ENCODE measurements at regions of chr22 and their contacts with region 1.

Region 1: DNA sequence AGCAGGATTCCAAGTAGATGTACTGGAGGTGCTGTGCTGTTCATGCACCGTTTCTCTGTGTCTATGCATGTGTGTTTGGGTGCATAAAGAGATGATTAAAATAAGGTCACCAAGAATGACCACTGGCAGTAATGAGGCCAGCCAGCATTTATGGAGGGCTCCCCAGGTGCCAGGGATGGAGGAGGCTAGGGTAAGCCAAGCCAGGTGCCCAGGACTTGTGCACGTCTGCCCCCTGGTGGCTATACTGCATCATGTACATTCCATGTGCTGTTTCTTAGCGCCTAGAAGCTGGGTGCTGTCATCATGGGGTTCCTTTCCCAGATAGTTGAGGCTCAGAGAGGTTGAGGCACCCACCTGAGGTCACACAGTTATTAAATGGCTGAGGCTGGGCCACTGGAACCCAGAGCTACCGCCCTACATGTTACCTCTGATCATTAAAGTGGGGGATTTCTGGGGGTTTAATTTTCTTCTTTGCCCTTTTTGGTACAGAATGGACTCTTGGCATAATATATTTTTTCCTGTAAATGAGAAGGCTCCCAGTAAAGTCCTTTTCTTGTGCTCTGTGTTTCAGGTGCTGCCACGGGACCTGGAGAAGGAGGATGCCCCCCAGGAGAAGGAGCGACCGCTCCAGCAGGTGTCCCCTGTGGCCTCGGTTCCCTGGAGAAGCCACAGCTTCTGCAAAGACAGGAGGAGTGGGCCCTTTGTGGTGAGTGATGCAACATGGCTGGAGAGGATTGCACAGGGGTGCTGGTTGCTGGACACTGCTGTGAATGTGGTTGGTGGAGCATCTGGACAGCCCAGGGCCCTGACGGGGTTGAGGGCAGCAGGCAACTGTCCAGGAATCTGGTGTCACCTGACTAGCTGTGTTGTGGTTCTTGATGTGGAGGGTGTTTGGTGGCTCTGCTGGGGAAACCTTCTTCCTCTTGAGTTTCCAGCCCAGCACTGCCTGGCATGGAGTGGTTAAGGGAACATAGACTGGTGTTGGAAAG is 96.4 kb downstream of the KIAA1671 start:
- DNase-seq: peak; percentile 52 to 67 (median 63)
- H3K4me3 ChIP-seq: no peak overlapping the region
- H3K27ac ChIP-seq: no peak overlapping the region
- H3K4me1 ChIP-seq: no peaks in the 10 kb centered on the region
- H3K27me3 ChIP-seq: no peaks in the 10 kb centered on the region

Region 2: GRCh38 chr22:24768537-24769374 is 280.2 kb before region 1 on chr22:
- CTCF ChIA-PET with region 1: interaction called, 15 read pairs
- POLR2A ChIA-PET with region 1: no interaction called
- DNase-seq: peak; percentile 34 to 73 (median 55)
- H3K4me3 ChIP-seq: no peak overlapping the region
- H3K27ac ChIP-seq: no peak overlapping the region
- H3K4me1 ChIP-seq: peaks cover 0 to 2% (median under 1%) of the 10 kb centered on the region in 4 experiments
- H3K27me3 ChIP-seq: peaks cover 0 to 3% (median 1%) of the 10 kb centered on the region in 5 experiments

Region 3: DNA sequence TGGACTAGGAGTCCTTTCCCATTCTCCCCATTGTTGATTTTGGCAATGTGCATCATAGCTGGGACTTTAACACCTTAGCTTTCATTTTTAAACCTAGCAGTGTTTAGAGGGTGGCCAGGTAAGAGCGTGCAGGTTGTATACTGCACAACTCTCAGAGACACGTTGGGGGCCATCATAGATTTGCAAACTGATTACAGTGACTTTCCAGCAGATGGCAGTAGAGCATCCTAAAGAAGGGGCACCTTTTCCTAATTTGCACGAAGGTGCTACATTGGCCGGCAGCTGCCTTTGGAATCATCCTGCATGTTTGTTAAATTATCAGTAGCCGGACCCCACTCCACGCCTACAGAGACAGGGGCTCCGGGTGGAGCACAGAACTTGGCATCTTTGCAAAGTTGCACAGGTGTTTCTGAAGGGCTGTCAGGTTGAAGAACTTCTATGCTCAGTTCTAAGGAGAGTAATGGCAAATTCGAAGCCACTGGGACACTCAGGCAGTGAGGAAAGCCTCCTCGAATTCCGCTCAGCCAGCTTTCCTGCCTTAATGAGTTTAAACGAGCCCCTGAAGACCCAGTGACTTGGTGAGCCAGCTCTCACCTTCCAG is 110.1 kb before region 1 on chr22:
- CTCF ChIA-PET with region 1: interaction called, 43 read pairs
- POLR2A ChIA-PET with region 1: no interaction called
- DNase-seq: peak; percentile 50 to 73 (median 66)
- H3K4me3 ChIP-seq: no peak overlapping the region
- H3K27ac ChIP-seq: no peak overlapping the region
- H3K4me1 ChIP-seq: no peaks in the 10 kb centered on the region
- H3K27me3 ChIP-seq: no peaks in the 10 kb centered on the region

Region 4: GRCh38 chr22:24951942-24952836 is 96.8 kb before region 1 on chr22 and contains the start of gene KIAA1671:
- CTCF ChIA-PET with region 1: interaction called, 50 read pairs
- POLR2A ChIA-PET with region 1: no interaction called
- DNase-seq: peak; percentile 67 to 83 (median 80)
- H3K4me3 ChIP-seq: peak within 1 kb of the TSS; percentile 54 to 84 (median 69)
- H3K27ac ChIP-seq: no peak within 1 kb of the TSS
- H3K4me1 ChIP-seq: peaks cover 0 to 17% (median 14%) of the 10 kb centered on the region in 4 experiments
- H3K27me3 ChIP-seq: peaks cover 4 to 40% (median 21%) of the 10 kb centered on the region in 5 experiments

Region 5: GRCh38 chr22:25091458-25091857 is 42.5 kb after region 1 on chr22:
- CTCF ChIA-PET with region 1: no interaction called
- POLR2A ChIA-PET with region 1: no interaction called
- DNase-seq: no peak
- H3K4me3 ChIP-seq: no peak overlapping the region
- H3K27ac ChIP-seq: no peak overlapping the region
- H3K4me1 ChIP-seq: peaks cover 0 to 4% (median 3%) of the 10 kb centered on the region in 4 experiments
- H3K27me3 ChIP-seq: no peaks in the 10 kb centered on the region